ENCODE measurements at regions of chr19 and their contacts with region 1.

Region 1: DNA sequence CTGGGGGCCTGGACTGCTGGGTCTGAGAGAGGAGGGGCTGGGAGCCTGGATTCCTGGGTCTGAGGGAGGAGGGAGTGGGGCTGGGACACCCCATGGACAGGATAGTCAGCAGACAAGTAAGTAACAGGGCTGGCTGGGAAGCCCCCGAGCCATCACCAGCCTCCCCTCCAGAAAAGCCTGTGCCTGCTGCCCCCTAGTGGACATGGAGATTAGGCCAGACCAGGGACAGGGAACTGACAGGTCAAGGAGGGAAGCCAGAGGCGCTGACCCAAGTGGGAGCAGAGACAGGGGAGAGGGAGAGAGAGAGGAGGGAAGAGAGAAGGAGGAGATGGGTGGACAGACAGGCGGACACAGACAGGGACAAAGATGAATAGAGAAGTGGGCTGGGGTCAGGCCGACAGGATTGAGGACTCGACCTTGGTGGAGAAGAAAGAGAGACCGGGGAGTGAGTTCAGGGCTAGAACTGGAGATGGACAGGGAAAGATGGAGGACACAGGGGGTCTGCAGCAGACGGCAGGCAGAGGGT is 6.7 kb upstream of the ERFL start:
- DNase-seq: peak; percentile 94
- H3K4me3 Mint-ChIP-seq: no peak overlapping the region
- H3K27ac Mint-ChIP-seq: peak overlapping the region; percentile 44
- H3K4me1 Mint-ChIP-seq: peaks cover 39% of the 10 kb centered on the region
- H3K27me3 Mint-ChIP-seq: no peaks in the 10 kb centered on the region

Region 2: DNA sequence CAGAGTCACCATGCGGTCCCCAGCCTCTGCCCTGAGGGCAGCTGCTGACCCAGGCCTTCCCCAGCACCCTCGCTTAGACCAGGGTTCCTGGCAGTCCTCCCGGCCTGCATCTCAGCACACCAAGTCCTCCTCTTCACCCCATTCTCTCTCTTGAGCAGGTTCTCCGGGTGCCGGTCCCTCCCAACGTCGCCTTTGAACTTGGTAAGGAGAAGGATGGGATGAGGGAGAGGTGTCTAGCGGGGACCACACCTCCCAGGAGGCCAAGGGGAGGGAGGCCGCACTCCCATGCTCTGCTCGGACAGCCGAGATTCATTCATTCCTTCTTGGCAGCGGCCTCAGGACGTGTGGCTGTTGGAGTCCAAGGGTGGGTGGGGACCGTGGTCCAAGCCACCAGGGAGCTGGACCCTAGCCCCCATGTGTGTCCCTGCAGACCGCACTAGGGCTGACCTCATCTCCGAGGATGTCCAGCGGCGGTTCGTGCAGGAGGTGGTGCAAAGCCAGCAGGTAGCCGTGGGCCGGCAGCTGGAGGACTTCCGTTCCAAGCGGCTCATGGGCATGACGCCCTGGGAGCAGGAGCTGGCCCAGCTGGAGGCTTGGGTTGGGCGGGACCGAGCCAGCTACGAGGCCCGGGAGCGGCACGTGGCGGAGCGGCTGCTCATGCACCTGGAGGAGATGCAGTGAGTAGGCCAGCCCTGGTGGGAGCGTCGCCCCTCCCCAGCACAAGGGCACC is 42.6 kb before region 1 on chr19:
- CTCF ChIA-PET with region 1: interaction called, 11 read pairs
- intact Hi-C with region 1: loop called (anchors 1 kb)
- DNase-seq: no peak
- H3K4me3 Mint-ChIP-seq: no peak overlapping the region
- H3K27ac Mint-ChIP-seq: peak overlapping the region; percentile 24
- H3K4me1 Mint-ChIP-seq: peaks cover 74% of the 10 kb centered on the region
- H3K27me3 Mint-ChIP-seq: no peaks in the 10 kb centered on the region

Region 3: DNA sequence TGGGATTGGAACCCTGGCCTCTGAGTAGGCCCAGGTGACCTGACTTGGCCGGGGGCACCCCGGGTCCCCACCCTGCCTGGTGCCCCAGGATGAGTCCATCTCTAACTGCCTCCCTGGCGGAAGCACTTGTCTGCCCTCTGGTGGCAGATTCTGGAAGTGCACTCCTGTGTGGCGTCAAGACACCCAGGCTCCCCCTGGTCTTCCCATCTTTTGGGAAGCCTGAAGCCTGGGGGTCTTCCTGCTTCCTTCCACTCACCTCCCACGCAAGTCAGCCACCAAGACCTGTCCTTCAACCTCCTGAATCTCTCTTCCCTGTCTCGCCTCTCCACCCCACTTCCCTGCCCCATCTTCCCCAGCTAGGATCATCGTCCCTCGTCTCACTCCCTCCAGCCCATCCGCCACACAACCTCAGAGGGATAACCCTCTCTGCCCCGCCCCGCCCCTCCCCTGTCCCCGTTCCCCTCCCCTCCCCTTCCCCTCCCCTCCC is 16.8 kb after region 1 on chr19:
- CTCF ChIA-PET with region 1: interaction called, 4 read pairs
- intact Hi-C with region 1: loop called (anchors 2 kb)
- DNase-seq: peak; percentile 95
- H3K4me3 Mint-ChIP-seq: no peak overlapping the region
- H3K27ac Mint-ChIP-seq: peak overlapping the region; percentile 63
- H3K4me1 Mint-ChIP-seq: peaks cover 14% of the 10 kb centered on the region
- H3K27me3 Mint-ChIP-seq: no peaks in the 10 kb centered on the region

Region 4: DNA sequence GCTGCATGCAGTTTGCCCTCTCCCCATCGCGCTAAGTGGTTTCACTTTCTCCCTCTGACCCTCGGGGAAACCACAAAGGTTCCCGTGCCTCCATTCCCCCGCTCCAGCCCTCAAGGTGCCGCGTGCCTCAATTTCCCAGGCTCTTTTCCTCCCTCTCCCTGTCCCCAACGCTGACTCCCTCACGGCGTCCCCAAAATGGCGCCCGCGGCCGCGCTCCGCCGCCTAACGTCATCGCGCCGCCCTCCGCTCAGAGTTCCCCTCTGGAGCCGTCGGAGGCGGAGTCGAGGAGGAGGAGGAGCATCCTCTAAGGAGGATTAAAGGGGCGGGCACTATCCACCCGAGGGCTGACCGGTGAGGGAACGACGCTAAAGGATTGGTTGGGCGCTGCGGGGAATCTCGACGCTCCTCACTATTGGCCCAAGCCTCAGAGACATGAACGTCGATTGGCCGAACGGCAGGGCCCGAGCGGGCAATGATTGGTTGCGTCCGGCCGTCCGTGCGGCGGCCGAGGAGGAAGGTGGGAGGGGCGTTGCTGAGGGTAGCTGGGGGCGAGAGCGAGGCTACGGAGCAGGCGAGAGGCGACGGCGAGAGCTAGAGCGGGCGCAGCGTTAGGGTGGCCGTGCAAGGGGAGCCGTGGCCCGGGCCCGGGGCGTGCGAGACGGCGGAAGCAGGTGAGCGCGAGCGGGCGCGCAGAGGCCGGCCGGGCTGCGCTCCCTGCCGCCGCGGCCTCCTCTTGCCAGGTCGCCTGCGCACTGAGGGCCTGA is 140.9 kb after region 1 on chr19 and contains the start of gene ZNF574:
- CTCF ChIA-PET with region 1: no interaction called
- intact Hi-C with region 1: no loop called
- DNase-seq: peak; percentile 99
- H3K4me3 Mint-ChIP-seq: peak within 1 kb of the TSS; percentile 97
- H3K27ac Mint-ChIP-seq: peak within 1 kb of the TSS; percentile 96
- H3K4me1 Mint-ChIP-seq: peaks cover 22% of the 10 kb centered on the region
- H3K27me3 Mint-ChIP-seq: no peaks in the 10 kb centered on the region
- total RNA-seq, gene ZNF574: 8.4 to 8.8 TPM

Measured in activated naive CD4-positive, alpha-beta T cell treated with anti-CD3 and anti-CD28 coated beads for 36 hours (primary cell).